Activated CD4-positive, alpha-beta memory T cell treated with anti-CD3 and anti-CD28 coated beads for 36 hours (primary cell): ENCODE measurements at regions of chr13 and their contacts with region 1.

Region 1: GRCh38 chr13:28527411-28528028 is 32.6 kb upstream of the FLT1 start:
- DNase-seq: no peak
- H3K4me3 Mint-ChIP-seq: no peak overlapping the region
- H3K27ac Mint-ChIP-seq: no peak overlapping the region
- H3K4me1 Mint-ChIP-seq: peaks cover 12% of the 10 kb centered on the region
- H3K27me3 Mint-ChIP-seq: peaks cover 29% of the 10 kb centered on the region

Region 2: DNA sequence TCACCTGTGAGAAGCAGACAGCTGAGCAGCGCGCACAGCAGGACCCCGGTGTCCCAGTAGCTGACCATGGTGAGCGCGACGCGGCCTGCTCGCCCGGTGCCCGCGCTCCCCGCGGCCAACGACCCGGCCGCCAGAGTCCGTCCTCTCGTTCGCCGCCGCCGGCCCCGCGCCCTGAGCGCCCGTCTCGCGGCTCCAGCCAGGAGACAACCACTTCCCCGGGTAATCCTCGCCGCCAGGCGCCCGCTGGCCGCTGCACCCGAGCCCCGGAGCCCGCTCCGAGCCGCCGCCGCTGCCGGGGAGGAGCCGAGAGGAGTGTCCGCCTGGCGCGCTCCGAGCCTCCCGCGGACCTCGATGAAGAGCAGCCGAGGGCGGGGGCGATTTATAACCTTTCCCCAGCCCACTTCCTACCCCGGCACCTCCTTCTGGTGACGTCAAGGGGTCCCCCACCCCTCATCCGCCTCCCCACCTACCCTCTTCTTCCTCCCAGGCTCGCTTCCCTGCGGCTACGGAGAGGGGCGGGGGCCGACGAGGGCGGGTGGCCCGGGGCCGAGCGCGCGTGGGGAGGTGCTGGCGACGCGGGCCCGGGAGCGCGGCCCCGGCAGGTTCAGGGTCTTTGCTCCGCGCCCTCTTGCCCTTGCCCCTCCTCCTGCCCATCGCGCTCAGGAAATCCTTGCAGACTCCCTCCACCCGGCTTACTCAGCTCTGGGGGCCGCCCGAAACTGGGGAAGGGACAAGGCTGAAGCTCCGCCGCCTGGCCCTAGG is 32.6 kb before region 1 on chr13 and contains the start of gene FLT1:
- CTCF ChIA-PET with region 1: no interaction called
- POLR2A ChIA-PET with region 1: no interaction called
- intact Hi-C with region 1: loop called (anchors 1 kb)
- DNase-seq: peak; percentile 39
- H3K4me3 Mint-ChIP-seq: peak within 1 kb of the TSS; percentile 70
- H3K27ac Mint-ChIP-seq: no peak within 1 kb of the TSS
- H3K4me1 Mint-ChIP-seq: peaks cover 10% of the 10 kb centered on the region
- H3K27me3 Mint-ChIP-seq: peaks cover 47% of the 10 kb centered on the region
- total RNA-seq, gene FLT1: 17.2 to 19.5 TPM

Region 3: GRCh38 chr13:28550721-28551497 is 23.4 kb after region 1 on chr13:
- CTCF ChIA-PET with region 1: no interaction called
- POLR2A ChIA-PET with region 1: no interaction called
- intact Hi-C with region 1: loop called (anchors 1 kb)
- DNase-seq: no peak
- H3K4me3 Mint-ChIP-seq: no peak overlapping the region
- H3K27ac Mint-ChIP-seq: peak overlapping the region; percentile 86
- H3K4me1 Mint-ChIP-seq: peaks cover 16% of the 10 kb centered on the region
- H3K27me3 Mint-ChIP-seq: peaks cover 12% of the 10 kb centered on the region